Activated CD4-positive, alpha-beta T cell treated with anti-CD3 and anti-CD28 coated beads for 36 hours (primary cell): ENCODE measurements at regions of chr3 and their contacts with region 1.

Region 1: GRCh38 chr3:71652781-71653413 is 69.4 kb upstream of the FOXP1 start:
- DNase-seq: peak; percentile 55
- ATAC-seq: peak; percentile 80
- H3K4me3 Mint-ChIP-seq: no peak overlapping the region
- H3K27ac Mint-ChIP-seq: no peak overlapping the region
- H3K4me1 Mint-ChIP-seq: peaks cover 5% of the 10 kb centered on the region
- H3K27me3 Mint-ChIP-seq: no peaks in the 10 kb centered on the region

Region 2: GRCh38 chr3:70064194-70064779 is 1588.6 kb before region 1 on chr3:
- CTCF ChIA-PET with region 1: interaction called, 4 read pairs
- POLR2A ChIA-PET with region 1: no interaction called
- intact Hi-C with region 1: loop called (anchors 5 to 10 kb)
- DNase-seq: peak; percentile 15
- ATAC-seq: peak; percentile 33
- H3K4me3 Mint-ChIP-seq: no peak overlapping the region
- H3K27ac Mint-ChIP-seq: no peak overlapping the region
- H3K4me1 Mint-ChIP-seq: no peaks in the 10 kb centered on the region
- H3K27me3 Mint-ChIP-seq: peaks cover 6% of the 10 kb centered on the region

Region 3: DNA sequence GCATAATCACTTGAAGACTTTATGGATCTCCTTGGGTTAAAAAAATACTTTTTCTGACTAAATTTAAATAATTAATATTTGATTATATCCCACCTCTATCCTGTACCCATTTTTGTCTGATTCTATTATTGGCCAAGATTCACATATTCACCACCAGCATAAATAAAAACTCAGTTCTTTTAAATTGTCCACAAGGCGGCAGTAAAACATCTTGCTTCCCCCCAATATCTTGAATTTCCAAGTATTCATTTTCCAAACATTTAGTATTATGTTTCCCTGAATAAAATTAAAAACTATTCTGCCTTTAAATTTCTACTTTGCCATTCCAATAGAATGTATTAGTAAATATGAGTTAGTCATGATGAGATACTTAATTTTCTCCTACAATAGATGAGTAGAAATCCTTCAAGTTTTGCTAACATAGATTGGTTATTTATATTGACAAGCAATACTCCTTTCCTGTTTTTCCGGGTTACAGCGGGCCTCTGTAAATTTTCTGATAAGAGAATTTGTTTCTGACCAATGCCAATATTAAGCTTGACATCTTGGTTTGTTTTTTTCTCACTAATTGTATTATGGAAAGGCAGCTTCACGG is 1121.7 kb before region 1 on chr3:
- CTCF ChIA-PET with region 1: interaction called, 3 read pairs
- POLR2A ChIA-PET with region 1: no interaction called
- intact Hi-C with region 1: loop called in 1 of 2 experiments (anchors 2 kb)
- DNase-seq: no peak
- ATAC-seq: no peak
- H3K4me3 Mint-ChIP-seq: no peak overlapping the region
- H3K27ac Mint-ChIP-seq: no peak overlapping the region
- H3K4me1 Mint-ChIP-seq: no peaks in the 10 kb centered on the region
- H3K27me3 Mint-ChIP-seq: peaks cover 4% of the 10 kb centered on the region

Region 4: GRCh38 chr3:70550723-70551319 is 1102.1 kb before region 1 on chr3:
- CTCF ChIA-PET with region 1: interaction called, 4 read pairs
- POLR2A ChIA-PET with region 1: no interaction called
- intact Hi-C with region 1: loop called (anchors 1 to 5 kb)
- DNase-seq: peak; percentile 88
- ATAC-seq: peak; percentile 91
- H3K4me3 Mint-ChIP-seq: no peak overlapping the region
- H3K27ac Mint-ChIP-seq: no peak overlapping the region
- H3K4me1 Mint-ChIP-seq: peaks cover 4% of the 10 kb centered on the region
- H3K27me3 Mint-ChIP-seq: peaks cover 2% of the 10 kb centered on the region

Region 5: GRCh38 chr3:70716832-70717231 is 936.1 kb before region 1 on chr3:
- CTCF ChIA-PET with region 1: no interaction called
- POLR2A ChIA-PET with region 1: no interaction called
- intact Hi-C with region 1: loop called in 1 of 2 experiments (anchors 5 kb)
- DNase-seq: peak; percentile 10
- ATAC-seq: no peak
- H3K4me3 Mint-ChIP-seq: no peak overlapping the region
- H3K27ac Mint-ChIP-seq: no peak overlapping the region
- H3K4me1 Mint-ChIP-seq: no peaks in the 10 kb centered on the region
- H3K27me3 Mint-ChIP-seq: peaks cover 3% of the 10 kb centered on the region

Region 6: GRCh38 chr3:70871909-70872656 is 780.8 kb before region 1 on chr3:
- CTCF ChIA-PET with region 1: no interaction called
- POLR2A ChIA-PET with region 1: no interaction called
- intact Hi-C with region 1: no loop called
- DNase-seq: no peak
- ATAC-seq: no peak
- H3K4me3 Mint-ChIP-seq: no peak overlapping the region
- H3K27ac Mint-ChIP-seq: no peak overlapping the region
- H3K4me1 Mint-ChIP-seq: no peaks in the 10 kb centered on the region
- H3K27me3 Mint-ChIP-seq: peaks cover 12% of the 10 kb centered on the region